Breast epithelium (tissue), 4 donors: ENCODE measurements at regions of chr2 and their contacts with region 1.

Region 1: GRCh38 chr2:217703102-217703501 is 299.7 kb downstream of the TNS1 start:
- DNase-seq: no peak
- H3K4me3 ChIP-seq: no peak overlapping the region
- H3K27ac ChIP-seq: no peak overlapping the region
- H3K4me1 ChIP-seq: peaks cover 0 to 6% of the 10 kb centered on the region in 2 donors
- H3K27me3 ChIP-seq: no peaks in the 10 kb centered on the region
- CTCF ChIP-seq: no peak
- POLR2A ChIP-seq: no peak

Region 2: DNA sequence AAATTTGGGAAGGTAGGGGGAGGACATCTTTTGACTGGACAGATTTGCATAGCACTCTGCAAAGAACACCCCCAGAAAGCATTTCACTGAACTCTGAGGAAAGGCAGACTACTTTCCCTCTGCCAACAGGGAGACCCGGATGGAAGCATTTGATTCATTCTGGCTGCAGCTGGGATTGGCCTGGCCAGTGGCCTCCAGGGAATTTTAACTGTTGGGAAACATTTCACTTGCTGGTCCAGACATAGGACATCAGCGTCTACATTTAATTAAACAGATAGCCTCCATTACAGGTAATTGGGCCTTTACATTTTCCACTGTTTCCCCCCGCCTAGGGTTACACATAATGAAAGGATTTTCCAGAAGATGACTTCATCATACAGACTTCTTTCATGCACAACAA is 1423.6 kb before region 1 on chr2:
- intact Hi-C with region 1: loop called (anchors 5 kb)
- DNase-seq: no peak
- H3K4me3 ChIP-seq: no peak overlapping the region
- H3K27ac ChIP-seq: no peak overlapping the region
- H3K4me1 ChIP-seq: no peaks in the 10 kb centered on the region
- H3K27me3 ChIP-seq: no peaks in the 10 kb centered on the region
- CTCF ChIP-seq: no peak
- POLR2A ChIP-seq: no peak